Left ventricle myocardium superior (tissue), 1 donor: ENCODE measurements at regions of chr17 and their contacts with region 1.

Region 1: DNA sequence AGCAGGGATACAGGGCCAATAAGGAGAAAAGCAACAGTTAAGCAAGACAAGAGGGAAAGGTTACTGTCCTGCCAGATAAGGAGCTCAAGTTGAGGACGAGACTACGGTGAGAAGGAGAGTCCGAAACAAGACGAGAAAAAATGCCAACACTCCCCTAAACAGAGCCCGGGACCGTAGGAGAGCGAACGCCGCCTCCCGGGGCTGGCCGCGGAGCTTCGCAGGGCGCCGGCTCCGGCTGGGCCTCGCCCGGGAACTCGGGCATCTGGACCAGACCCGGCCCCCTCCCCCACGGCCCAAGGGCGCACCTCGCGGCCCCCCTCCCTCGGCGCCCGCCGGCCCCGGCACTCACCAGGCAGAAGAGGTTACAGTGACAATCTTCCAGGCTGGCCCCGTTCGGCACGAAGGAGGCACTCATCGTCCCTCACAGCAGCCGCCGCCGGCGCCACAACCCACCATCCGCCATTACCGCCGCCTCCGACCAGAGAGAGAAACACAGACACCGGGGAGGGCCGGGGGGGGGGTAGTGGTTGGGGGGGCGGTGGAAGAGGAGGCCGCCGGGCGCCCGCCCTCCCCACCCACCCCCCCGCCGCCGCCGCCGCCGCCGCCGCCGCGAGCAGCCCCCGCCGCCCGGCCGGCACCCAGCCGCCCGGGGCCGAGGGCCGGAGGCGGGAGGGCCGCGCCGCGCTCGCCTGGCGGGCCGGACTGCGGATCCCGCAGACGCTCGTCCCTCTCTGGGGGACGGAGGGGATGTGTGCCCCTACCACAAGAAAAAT is at the start of gene MED13:
- DNase-seq: peak; percentile 82
- ATAC-seq: peak; percentile 70
- total RNA-seq, gene MED13: 25.7 TPM

Region 2: DNA sequence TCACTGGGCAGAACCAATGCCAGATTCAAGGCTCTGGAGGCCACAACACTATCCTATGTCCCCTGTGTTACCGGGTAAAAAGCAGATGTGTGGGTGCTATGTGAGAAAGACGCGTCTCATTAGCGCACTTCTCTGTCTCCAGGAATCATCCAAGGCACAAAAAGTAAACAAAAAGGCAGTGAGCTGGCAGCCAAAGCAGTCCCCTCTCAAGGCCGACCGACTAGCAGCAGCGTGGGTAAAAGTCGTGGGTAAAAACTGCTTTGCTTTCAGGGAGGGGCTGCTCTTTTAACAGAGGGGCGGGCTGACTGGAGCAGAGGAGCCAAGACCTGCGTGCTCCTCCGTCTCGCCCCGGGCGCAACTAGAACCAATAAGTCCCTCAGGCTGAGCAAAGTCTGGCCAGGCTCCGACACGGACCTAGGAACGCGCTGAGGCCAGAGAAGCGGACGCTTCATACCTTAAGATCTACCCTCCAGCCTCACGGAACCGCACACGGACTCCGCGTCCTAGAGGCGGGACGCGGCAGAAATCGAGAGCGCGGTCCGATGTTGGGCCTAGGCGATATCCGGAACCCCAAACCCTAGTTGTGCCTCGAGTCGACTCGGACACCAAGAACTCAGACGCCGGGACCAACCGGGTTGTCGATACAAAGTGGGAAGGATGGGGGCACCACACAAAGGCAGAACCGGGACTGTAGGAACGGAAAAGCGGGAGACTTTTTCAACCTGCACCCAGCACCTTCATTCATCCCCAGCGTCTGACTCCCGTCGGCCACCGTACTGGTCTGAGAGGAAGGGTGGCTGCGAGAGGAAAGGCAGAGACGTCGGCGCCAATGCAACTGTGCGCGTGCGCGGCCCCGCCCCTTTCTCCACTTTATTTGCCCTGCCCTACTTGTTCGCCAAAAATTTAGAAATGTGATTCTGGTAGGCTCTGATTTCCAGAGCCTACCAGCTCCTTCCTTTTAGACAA is 137.5 kb before region 1 on chr17 and contains the start of gene INTS2:
- intact Hi-C with region 1: loop called (anchors 5 kb)
- DNase-seq: peak; percentile 97
- ATAC-seq: peak; percentile 99
- total RNA-seq, gene INTS2: 8.4 TPM

Region 3: DNA sequence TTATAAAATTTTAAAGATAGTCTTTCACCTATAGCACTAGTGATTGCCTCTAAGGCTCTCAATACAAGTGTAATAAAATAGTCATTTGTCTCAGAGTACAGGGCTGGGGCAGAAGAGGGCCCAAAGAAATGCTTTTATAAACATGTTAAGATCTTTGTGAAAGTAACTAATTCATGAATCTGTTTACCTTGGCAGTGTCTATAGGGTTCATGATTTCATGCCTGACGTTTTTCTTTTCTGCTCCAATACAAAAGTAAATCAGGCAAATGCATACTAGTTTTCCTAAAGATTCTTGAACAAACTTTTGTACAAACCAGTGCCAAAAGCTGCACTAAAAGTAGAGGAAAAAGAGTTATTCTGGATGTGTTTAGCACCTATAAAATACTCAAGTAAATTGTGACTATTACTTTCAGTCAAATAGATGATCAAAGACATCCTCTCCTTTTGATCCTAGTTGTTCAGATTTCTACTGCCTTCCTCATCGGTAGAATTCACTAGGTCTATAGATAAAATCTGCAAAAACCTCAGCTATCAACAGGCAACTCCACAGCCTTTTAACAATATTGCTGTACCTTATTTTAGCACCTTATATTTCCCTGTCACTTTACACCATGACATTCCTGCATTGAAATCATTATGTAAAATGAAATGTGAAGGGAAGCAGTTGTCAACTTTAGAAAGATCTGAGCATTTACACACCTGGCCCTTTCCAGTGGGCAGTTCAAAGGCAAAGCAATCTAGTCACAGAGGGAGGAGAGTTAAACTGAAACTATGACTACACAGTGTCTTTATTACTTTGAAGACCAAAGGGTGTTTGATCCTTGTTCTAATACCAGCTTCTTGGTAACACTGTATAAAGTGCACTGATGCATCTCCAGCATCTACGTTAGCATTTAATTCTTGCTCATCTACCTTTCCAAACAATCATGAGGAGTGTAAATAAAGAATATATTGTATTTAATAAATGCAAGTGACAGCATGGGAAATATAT is 100.1 kb after region 1 on chr17:
- intact Hi-C with region 1: no loop called
- DNase-seq: no peak
- ATAC-seq: no peak